Transverse colon (tissue), 4 donors: ENCODE measurements at regions of chr6 and their contacts with region 1.

Region 1: GRCh38 chr6:10369881-10370280 is 45.0 kb downstream of the TFAP2A start:
- DNase-seq: no peak
- H3K4me3 ChIP-seq: no peak overlapping the region
- H3K27ac ChIP-seq: no peak overlapping the region
- H3K4me1 ChIP-seq: no peaks in the 10 kb centered on the region
- H3K27me3 ChIP-seq: no peaks in the 10 kb centered on the region
- CTCF ChIP-seq: no peak
- EP300 ChIP-seq: no peak
- POLR2A ChIP-seq: no peak

Region 2: GRCh38 chr6:8914700-8915099 is 1455.2 kb before region 1 on chr6:
- in situ Hi-C with region 1: no loop called
- intact Hi-C with region 1: loop called (anchors 5 kb)
- DNase-seq: no peak
- H3K4me3 ChIP-seq: no peak overlapping the region
- H3K27ac ChIP-seq: no peak overlapping the region
- H3K4me1 ChIP-seq: no peaks in the 10 kb centered on the region
- H3K27me3 ChIP-seq: no peaks in the 10 kb centered on the region
- CTCF ChIP-seq: no peak
- EP300 ChIP-seq: no peak
- POLR2A ChIP-seq: no peak